ENCODE measurements at regions of chr2 and their contacts with region 1.

Region 1: GRCh38 chr2:190927301-190927700 is 46.7 kb downstream of the GLS start:
- DNase-seq: no peak
- ATAC-seq: no peak
- H3K4me3 ChIP-seq: no peak overlapping the region
- H3K4me3 Mint-ChIP-seq: no peak overlapping the region
- H3K27ac ChIP-seq: no peak overlapping the region
- H3K27ac Mint-ChIP-seq: peak overlapping the region in 6 of 9 donors; percentile 17 to 70 (median 43)
- H3K4me1 ChIP-seq: no peaks in the 10 kb centered on the region
- H3K4me1 Mint-ChIP-seq: peaks cover 2 to 22% (median 13%) of the 10 kb centered on the region in 7 donors
- H3K27me3 ChIP-seq: no peaks in the 10 kb centered on the region
- H3K27me3 Mint-ChIP-seq: no peaks in the 10 kb centered on the region

Region 2: GRCh38 chr2:190904640-190905261 is 22.6 kb before region 1 on chr2:
- CTCF ChIA-PET with region 1: no interaction called
- POLR2A ChIA-PET with region 1: interaction called, 3 read pairs
- intact Hi-C with region 1: loop called in 1 of 2 experiments (anchors 2 kb)
- DNase-seq: no peak
- ATAC-seq: no peak
- H3K4me3 ChIP-seq: no peak overlapping the region
- H3K4me3 Mint-ChIP-seq: no peak overlapping the region
- H3K27ac ChIP-seq: no peak overlapping the region
- H3K27ac Mint-ChIP-seq: peak overlapping the region in 3 of 9 donors; percentile 59 to 69 (median 61)
- H3K4me1 ChIP-seq: peaks cover 0 to 3% of the 10 kb centered on the region in 2 donors
- H3K4me1 Mint-ChIP-seq: peaks cover 0 to 19% (median 11%) of the 10 kb centered on the region in 7 donors
- H3K27me3 ChIP-seq: no peaks in the 10 kb centered on the region
- H3K27me3 Mint-ChIP-seq: no peaks in the 10 kb centered on the region

Region 3: GRCh38 chr2:190911813-190912212 is 15.5 kb before region 1 on chr2:
- CTCF ChIA-PET with region 1: no interaction called
- POLR2A ChIA-PET with region 1: interaction called, 3 read pairs
- intact Hi-C with region 1: loop called in 1 of 2 experiments (anchors 2 kb)
- DNase-seq: no peak
- ATAC-seq: peak; percentile 34
- H3K4me3 ChIP-seq: no peak overlapping the region
- H3K4me3 Mint-ChIP-seq: peak overlapping the region in 1 of 10 donors; percentile 32
- H3K27ac ChIP-seq: no peak overlapping the region
- H3K27ac Mint-ChIP-seq: peak overlapping the region in 4 of 9 donors; percentile 2 to 41 (median 26)
- H3K4me1 ChIP-seq: peaks cover 0 to 7% of the 10 kb centered on the region in 2 donors
- H3K4me1 Mint-ChIP-seq: peaks cover 11 to 47% (median 30%) of the 10 kb centered on the region in 7 donors
- H3K27me3 ChIP-seq: no peaks in the 10 kb centered on the region
- H3K27me3 Mint-ChIP-seq: no peaks in the 10 kb centered on the region

Region 4: DNA sequence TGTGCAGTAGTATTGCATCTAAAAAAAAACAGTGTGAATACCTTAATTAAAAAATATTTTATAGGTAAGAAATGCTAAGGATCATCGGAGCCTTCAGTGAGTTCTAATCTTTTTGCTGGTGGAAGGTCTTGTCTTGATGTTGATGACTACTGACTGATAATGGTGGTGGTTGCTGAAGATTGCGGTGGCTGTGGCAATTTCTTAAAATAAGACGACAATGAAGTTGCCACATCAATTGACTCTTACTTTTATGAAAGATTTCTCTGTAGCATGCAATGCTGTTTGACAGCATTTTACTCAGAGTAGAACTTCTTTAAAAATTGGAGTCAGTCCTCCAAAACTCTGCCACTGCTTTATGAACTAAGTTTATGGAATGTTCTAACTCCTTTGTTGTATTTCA is 10.5 kb before region 1 on chr2:
- CTCF ChIA-PET with region 1: no interaction called
- POLR2A ChIA-PET with region 1: interaction called, 3 read pairs
- intact Hi-C with region 1: loop called in 1 of 2 experiments (anchors 1 kb)
- DNase-seq: peak in 6 of 9 donors; percentile 22 to 69 (median 42)
- ATAC-seq: peak; percentile 63
- H3K4me3 ChIP-seq: no peak overlapping the region
- H3K4me3 Mint-ChIP-seq: peak overlapping the region in 4 of 10 donors; percentile 19 to 43 (median 28)
- H3K27ac ChIP-seq: no peak overlapping the region
- H3K27ac Mint-ChIP-seq: peak overlapping the region in 4 of 9 donors; percentile 61 to 82 (median 72)
- H3K4me1 ChIP-seq: no peaks in the 10 kb centered on the region
- H3K4me1 Mint-ChIP-seq: peaks cover 18 to 54% (median 44%) of the 10 kb centered on the region in 7 donors
- H3K27me3 ChIP-seq: no peaks in the 10 kb centered on the region
- H3K27me3 Mint-ChIP-seq: no peaks in the 10 kb centered on the region

Measured in naive thymus-derived CD4-positive, alpha-beta T cell (primary cell).